ENCODE measurements at regions of chr1 and their contacts with region 1.

Region 1: DNA sequence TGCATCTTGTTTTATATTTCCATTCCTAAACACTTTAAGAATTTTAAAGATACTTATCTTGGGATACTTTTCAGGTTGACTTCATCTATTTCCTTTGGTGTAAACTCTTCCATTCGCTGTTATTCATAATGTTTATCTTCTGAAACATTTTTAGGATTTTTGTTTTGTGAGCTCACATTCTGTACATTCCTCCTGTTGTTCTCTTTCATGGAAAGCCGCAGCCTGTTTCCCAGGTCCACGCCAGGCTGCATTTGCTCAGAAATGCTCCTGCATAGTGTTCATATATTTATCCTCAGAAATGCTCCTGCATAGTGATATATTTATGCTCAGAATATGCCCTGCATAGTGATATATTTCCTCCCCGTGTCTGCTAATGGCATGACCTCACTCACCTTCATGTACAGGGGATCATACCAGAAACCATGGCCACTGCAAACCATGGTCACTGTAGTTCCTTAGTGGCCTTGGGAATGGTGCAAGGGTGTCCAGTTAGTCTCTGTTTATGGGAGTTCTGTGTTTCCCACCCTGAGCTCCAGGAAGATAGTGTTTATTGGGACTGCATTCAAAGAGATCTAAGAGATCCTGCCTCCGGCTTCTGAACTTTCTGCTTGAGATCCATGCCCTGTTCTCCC is 153.9 kb upstream of the GREM2 start:
- DNase-seq: peak; percentile 91
- ATAC-seq: peak; percentile 88
- H3K4me3 ChIP-seq: peak overlapping the region; percentile 5; the same call in 1 of the 2 replicates
- H3K27ac ChIP-seq: peak overlapping the region; percentile 3; the same call in 1 of the 2 replicates
- H3K4me1 ChIP-seq: peaks cover 33% of the 10 kb centered on the region
- H3K27me3 ChIP-seq: no peaks in the 10 kb centered on the region
- CTCF ChIP-seq: no peak

Region 2: DNA sequence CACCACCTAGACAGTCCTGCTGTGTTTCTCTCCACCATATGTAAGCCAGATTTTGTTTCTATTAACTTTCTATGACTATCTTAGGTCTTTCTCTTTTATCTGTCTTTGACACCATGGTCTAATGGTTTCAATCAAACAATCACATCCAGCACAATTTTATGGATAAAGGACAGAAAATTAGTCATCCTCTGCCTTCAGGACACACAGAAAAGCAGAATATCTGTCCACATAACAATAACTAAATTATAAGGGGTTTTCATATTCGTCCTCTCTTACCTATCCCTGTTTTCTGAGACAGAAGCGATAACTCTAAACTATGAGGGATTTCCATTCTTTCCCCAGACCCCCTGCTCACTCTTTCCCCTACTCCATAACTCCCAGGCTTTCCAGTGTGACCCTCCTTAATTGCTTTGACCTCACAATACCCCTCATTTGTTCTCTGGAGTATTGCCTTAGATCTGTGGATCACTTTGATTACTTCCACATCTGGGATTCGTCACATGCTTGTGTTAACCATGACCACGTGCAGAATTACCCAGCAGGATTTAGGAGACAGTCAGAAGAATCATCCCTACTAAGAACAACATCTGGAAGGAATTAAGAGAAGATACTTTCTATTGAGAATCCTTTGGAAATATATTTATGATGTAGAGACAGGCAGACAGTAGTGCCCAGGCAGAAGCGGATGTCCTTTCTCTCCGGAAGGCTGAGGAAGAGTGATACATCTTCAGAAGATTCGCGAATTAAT is 45.7 kb before region 1 on chr1:
- CTCF ChIA-PET with region 1: no interaction called
- POLR2A ChIA-PET with region 1: no interaction called
- intact Hi-C with region 1: no loop called
- DNase-seq: no peak
- ATAC-seq: no peak
- H3K4me3 ChIP-seq: no peak overlapping the region
- H3K27ac ChIP-seq: no peak overlapping the region
- H3K4me1 ChIP-seq: no peaks in the 10 kb centered on the region
- H3K27me3 ChIP-seq: peaks cover 67% of the 10 kb centered on the region
- CTCF ChIP-seq: no peak

Region 3: GRCh38 chr1:240776237-240776636 is 10.4 kb after region 1 on chr1:
- CTCF ChIA-PET with region 1: no interaction called
- POLR2A ChIA-PET with region 1: no interaction called
- intact Hi-C with region 1: loop called (anchors 1 kb)
- DNase-seq: no peak
- ATAC-seq: peak; percentile 45
- H3K4me3 ChIP-seq: no peak overlapping the region
- H3K27ac ChIP-seq: no peak overlapping the region
- H3K4me1 ChIP-seq: no peaks in the 10 kb centered on the region
- H3K27me3 ChIP-seq: no peaks in the 10 kb centered on the region
- CTCF ChIP-seq: no peak

Region 4: DNA sequence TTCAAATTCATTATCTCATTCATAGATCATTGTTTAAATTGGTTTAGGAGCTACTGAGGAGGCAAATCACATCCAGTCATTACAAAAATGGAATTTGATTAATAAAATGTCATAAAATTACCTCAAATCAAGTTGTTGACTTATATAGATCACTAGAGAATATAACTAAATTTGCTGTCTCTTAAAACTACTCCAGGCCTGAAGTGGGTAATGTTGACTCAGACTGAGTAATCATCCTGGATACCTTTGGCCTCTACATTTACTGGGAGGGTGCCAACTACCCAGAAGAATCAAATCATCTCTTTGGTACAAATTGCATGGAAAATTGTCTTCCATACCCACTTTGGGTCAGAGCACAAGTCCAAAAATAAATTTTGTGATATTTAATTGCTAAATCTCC is 37.3 kb after region 1 on chr1:
- CTCF ChIA-PET with region 1: no interaction called
- POLR2A ChIA-PET with region 1: no interaction called
- intact Hi-C with region 1: loop called (anchors 2 kb)
- DNase-seq: peak; percentile 96
- ATAC-seq: peak; percentile 87
- H3K4me3 ChIP-seq: peak overlapping the region; percentile 48
- H3K27ac ChIP-seq: peak overlapping the region; percentile 91
- H3K4me1 ChIP-seq: peaks cover 53% of the 10 kb centered on the region
- H3K27me3 ChIP-seq: no peaks in the 10 kb centered on the region
- CTCF ChIP-seq: no peak

Measured in PC-3 (cell line).